SK-N-SH (cell line): ENCODE measurements at regions of chr2 and their contacts with region 1.

Region 1: GRCh38 chr2:70301344-70302194 is at the start of gene FAM136A:
- DNase-seq: peak; percentile 96
- H3K4me3 ChIP-seq: peak within 1 kb of the TSS; percentile 82 to 97
- H3K27ac ChIP-seq: peak within 1 kb of the TSS; percentile 53 to 85
- H3K4me1 ChIP-seq: peaks cover 6 to 9% of the 10 kb centered on the region in 2 experiments; a peak in 1 of 4 replicates
- H3K27me3 ChIP-seq: no peaks in the 10 kb centered on the region
- CTCF ChIP-seq: peak; percentile 80
- EP300 ChIP-seq: 0 out of 4 replicates have a peak, but pooled peaks of 1 of the 2 experiments have one; percentile 30
- RAD21 ChIP-seq: peak; percentile 46; the same call in 1 of the 2 replicates
- polyA plus RNA-seq, gene FAM136A: 43.3 and 50.6 TPM in 2 replicates

Region 2: DNA sequence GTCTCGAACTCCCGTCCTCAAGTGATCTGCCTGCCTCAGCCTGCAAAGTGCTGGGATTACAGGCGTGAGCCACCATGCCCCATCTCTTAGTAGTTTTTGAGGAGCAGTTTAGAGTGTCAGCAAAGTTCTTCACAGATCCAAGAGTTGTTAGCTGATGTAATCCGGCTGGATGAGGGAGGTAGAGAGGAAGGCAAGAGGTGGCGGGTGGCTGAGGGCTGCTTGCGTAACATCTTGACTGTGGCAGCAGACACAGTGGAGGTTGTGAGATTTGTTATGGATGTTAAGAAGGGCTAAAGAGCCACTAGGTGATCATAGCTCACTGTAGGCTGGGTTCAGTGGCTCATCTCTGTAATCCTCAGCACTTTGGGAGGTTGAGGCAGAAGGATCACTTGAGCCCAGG is 19.8 kb after region 1 on chr2:
- CTCF ChIA-PET with region 1: interaction called, 18 read pairs
- POLR2A ChIA-PET with region 1: no interaction called
- DNase-seq: no peak
- H3K4me3 ChIP-seq: no peak overlapping the region
- H3K27ac ChIP-seq: no peak overlapping the region
- H3K4me1 ChIP-seq: no peaks in the 10 kb centered on the region
- H3K27me3 ChIP-seq: peaks cover 22% of the 10 kb centered on the region; the same call in 1 of the 2 replicates
- CTCF ChIP-seq: no peak
- EP300 ChIP-seq: no peak
- RAD21 ChIP-seq: no peak

Region 3: GRCh38 chr2:70607121-70607561 is 305.6 kb after region 1 on chr2:
- CTCF ChIA-PET with region 1: interaction called, 12 read pairs
- POLR2A ChIA-PET with region 1: interaction called, 3 read pairs
- DNase-seq: no peak
- H3K4me3 ChIP-seq: no peak overlapping the region
- H3K27ac ChIP-seq: no peak overlapping the region
- H3K4me1 ChIP-seq: no peaks in the 10 kb centered on the region
- H3K27me3 ChIP-seq: peaks cover 14% of the 10 kb centered on the region; the same call in 1 of the 2 replicates
- CTCF ChIP-seq: no peak
- EP300 ChIP-seq: no peak
- RAD21 ChIP-seq: no peak

Region 4: GRCh38 chr2:70647873-70648481 is 346.4 kb after region 1 on chr2:
- CTCF ChIA-PET with region 1: interaction called, 111 read pairs
- POLR2A ChIA-PET with region 1: no interaction called
- DNase-seq: peak; percentile 73
- H3K4me3 ChIP-seq: peak overlapping the region in 1 of 2 experiments; percentile 47; a peak in 1 of 4 replicates
- H3K27ac ChIP-seq: no peak overlapping the region
- H3K4me1 ChIP-seq: no peaks in the 10 kb centered on the region
- H3K27me3 ChIP-seq: 0 out of 2 replicates have a peak, but pooled peaks cover 6% of the 10 kb centered on the region
- CTCF ChIP-seq: peak; percentile 93
- EP300 ChIP-seq: no peak
- RAD21 ChIP-seq: peak; percentile 91

Region 5: GRCh38 chr2:70789304-70790135 is 488.0 kb after region 1 on chr2:
- CTCF ChIA-PET with region 1: interaction called, 31 read pairs
- POLR2A ChIA-PET with region 1: no interaction called
- DNase-seq: peak; percentile 81
- H3K4me3 ChIP-seq: peak overlapping the region; percentile 26 to 55
- H3K27ac ChIP-seq: no peak overlapping the region
- H3K4me1 ChIP-seq: peaks cover 0 to 9% of the 10 kb centered on the region in 2 experiments; a peak in 1 of 4 replicates
- H3K27me3 ChIP-seq: peaks cover 44% of the 10 kb centered on the region
- CTCF ChIP-seq: peak; percentile 69
- EP300 ChIP-seq: no peak
- RAD21 ChIP-seq: peak; percentile 83